WTC11 (cell line): ENCODE measurements at regions of chr18 and their contacts with region 1.

Region 1: GRCh38 chr18:12934454-12935071 is 13.2 kb upstream of the SEH1L start:
- DNase-seq: peak; percentile 87
- ATAC-seq: peak; percentile 95
- H3K4me3 Mint-ChIP-seq: no peak overlapping the region
- H3K27ac Mint-ChIP-seq: no peak overlapping the region
- H3K4me1 Mint-ChIP-seq: peaks cover 6% of the 10 kb centered on the region
- H3K27me3 Mint-ChIP-seq: no peaks in the 10 kb centered on the region; the same call in 1 of the 2 replicates
- CTCF ChIP-seq: peak; percentile 66

Region 2: DNA sequence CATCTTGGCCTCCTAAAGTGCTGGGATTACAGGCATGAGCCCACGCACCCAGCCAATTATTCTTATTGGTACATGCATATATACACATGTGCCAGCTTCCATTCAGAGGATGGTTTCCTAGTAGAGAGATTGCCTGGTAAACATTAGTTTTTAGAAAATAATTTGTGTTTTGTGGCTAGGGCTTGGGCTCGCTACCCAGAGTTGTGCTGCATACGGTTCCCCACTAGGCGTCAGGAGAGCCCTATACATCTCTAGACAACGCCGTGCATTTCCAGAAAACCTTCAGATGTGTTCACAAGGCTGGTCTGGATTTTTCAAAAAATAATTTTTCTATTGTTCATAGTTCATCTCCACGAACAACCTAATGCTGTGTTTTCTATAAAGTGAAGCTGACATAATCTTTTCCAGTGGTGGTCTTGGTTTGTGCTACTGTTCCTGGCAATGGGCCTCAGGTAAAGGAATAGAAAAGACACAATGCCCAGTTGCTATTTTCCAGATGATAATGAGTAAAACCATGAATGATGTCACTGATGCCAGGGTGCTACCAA is 542.9 kb before region 1 on chr18:
- CTCF ChIA-PET with region 1: interaction called, 15 read pairs
- POLR2A ChIA-PET with region 1: no interaction called
- DNase-seq: peak; percentile 50
- ATAC-seq: peak; percentile 78
- H3K4me3 Mint-ChIP-seq: no peak overlapping the region
- H3K27ac Mint-ChIP-seq: no peak overlapping the region; the same call in 1 of the 2 replicates
- H3K4me1 Mint-ChIP-seq: peaks cover 9% of the 10 kb centered on the region
- H3K27me3 Mint-ChIP-seq: no peaks in the 10 kb centered on the region
- CTCF ChIP-seq: peak; percentile 73

Region 3: DNA sequence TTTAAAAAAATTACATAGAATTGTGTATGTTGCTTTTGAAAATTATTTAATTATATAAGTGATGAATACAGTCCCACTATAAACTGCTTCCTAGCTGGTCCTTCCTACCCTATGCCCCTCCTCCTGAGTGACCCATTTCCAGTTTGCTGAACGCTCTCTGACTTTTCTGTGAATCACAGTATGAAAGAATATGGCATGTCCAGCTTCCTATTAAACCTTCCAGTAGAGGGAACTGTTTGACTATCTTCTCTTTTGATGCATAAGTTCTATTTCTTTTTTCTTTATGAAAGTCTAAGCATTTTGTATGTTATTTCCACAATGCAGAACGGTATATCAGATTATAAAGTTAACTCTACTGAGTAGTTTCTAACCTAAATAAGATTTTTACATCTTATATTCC is 190.5 kb before region 1 on chr18:
- CTCF ChIA-PET with region 1: interaction called, 22 read pairs
- POLR2A ChIA-PET with region 1: no interaction called
- DNase-seq: no peak
- ATAC-seq: no peak; the same call in 1 of the 2 replicates
- H3K4me3 Mint-ChIP-seq: no peak overlapping the region
- H3K27ac Mint-ChIP-seq: no peak overlapping the region
- H3K4me1 Mint-ChIP-seq: no peaks in the 10 kb centered on the region
- H3K27me3 Mint-ChIP-seq: no peaks in the 10 kb centered on the region
- CTCF ChIP-seq: no peak

Region 4: DNA sequence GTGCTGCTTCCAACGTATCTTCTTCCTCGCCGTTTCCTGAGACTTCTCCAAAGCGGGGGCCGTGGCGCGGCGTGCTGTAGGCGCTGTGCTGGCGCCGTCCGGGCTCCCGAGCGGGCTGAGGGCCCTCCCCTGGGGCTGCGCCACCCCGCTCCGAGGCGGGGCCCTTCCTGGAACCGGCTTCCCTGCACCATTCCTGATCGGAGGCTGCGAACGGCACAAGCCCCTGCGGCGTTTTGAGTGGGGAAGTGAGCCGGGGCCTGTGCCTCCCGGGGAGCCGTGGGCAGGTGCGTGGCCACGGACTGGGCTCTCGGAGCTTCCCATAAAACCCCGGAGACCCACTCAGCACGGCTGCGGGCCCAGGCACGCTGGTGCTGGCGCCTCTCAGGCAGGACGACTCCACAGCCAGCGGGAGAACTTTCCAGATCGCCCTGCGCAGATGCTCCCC is 157.0 kb before region 1 on chr18:
- CTCF ChIA-PET with region 1: interaction called, 22 read pairs
- POLR2A ChIA-PET with region 1: no interaction called
- DNase-seq: peak; percentile 53
- ATAC-seq: peak; percentile 74
- H3K4me3 Mint-ChIP-seq: peak overlapping the region; percentile 65
- H3K27ac Mint-ChIP-seq: no peak overlapping the region
- H3K4me1 Mint-ChIP-seq: no peaks in the 10 kb centered on the region
- H3K27me3 Mint-ChIP-seq: peaks cover 48% of the 10 kb centered on the region
- CTCF ChIP-seq: no peak

Region 5: GRCh38 chr18:12890506-12890905 is 44.1 kb before region 1 on chr18:
- CTCF ChIA-PET with region 1: interaction called, 30 read pairs
- POLR2A ChIA-PET with region 1: no interaction called
- DNase-seq: no peak
- ATAC-seq: peak; percentile 74
- H3K4me3 Mint-ChIP-seq: no peak overlapping the region
- H3K27ac Mint-ChIP-seq: no peak overlapping the region
- H3K4me1 Mint-ChIP-seq: peaks cover 9% of the 10 kb centered on the region
- H3K27me3 Mint-ChIP-seq: no peaks in the 10 kb centered on the region
- CTCF ChIP-seq: no peak

Region 6: GRCh38 chr18:12947355-12948041 is 12.9 kb after region 1 on chr18 and contains the start of gene SEH1L:
- CTCF ChIA-PET with region 1: interaction called, 19 read pairs
- POLR2A ChIA-PET with region 1: interaction called, 4 read pairs
- DNase-seq: peak; percentile 98
- ATAC-seq: peak; percentile 95
- H3K4me3 Mint-ChIP-seq: peak within 1 kb of the TSS; percentile 92
- H3K27ac Mint-ChIP-seq: peak within 1 kb of the TSS; percentile 98
- H3K4me1 Mint-ChIP-seq: peaks cover 21% of the 10 kb centered on the region
- H3K27me3 Mint-ChIP-seq: no peaks in the 10 kb centered on the region
- CTCF ChIP-seq: no peak
- total RNA-seq, gene SEH1L: 75.5 to 81.2 TPM (median 79.1 TPM) in 3 replicates